Cardiac septum (tissue), 1 donor: ENCODE measurements at regions of chr1 and their contacts with region 1.

Region 1: DNA sequence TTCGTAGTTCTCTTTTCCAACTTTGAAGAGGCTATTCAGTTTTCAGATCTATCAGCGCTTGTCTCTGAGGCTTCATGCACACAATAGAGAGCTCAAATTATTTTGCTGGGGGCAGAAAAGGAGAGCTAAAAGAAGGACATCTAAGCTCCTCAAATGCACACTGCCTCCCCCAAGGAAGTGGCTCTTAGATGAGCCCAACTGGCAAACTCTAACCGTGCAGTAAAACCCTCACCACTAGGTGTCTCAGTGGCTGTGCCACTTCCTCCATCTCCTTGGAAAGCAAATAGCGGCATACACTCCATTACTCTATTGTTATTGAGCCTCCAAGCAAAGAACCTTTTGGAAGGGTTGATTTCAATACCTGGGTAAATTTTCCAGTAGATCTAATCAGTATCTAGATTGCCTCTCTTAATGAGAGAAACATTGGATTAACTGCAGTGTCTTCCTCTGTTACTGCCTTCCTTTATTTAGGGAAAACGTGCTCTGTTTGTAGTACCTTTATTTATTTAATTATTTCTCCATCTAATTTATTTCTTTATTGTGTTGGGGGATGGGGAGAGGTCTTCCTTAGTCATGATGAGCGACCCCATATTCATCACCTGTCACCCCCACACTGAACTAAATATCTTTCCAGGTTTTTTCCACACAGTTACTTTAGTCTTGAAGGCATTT is 9.2 kb upstream of the SFPQ start:
- DNase-seq: peak; percentile 76

Region 2: DNA sequence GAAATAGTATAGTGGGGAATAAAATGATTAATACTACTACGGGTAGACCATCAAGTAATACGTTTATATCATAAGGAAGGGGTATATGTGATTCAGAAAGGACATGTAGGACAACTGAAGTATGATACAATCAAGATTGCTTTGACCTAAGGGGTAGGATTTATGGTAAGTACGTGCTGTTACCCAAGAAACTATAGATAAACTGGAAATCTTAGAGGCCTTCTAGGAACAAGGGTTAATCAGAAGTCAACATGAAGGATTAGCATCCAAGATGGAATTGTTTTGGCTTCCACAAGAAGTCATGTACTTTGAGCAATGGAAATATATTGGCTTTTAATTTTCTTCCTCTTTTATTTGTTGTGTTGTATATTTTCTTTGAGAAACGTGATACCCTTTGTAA is 53.1 kb after region 1 on chr1:
- intact Hi-C with region 1: no loop called
- DNase-seq: no peak

Region 3: GRCh38 chr1:35287807-35288640 is 85.8 kb after region 1 on chr1:
- intact Hi-C with region 1: no loop called
- DNase-seq: no peak

Region 4: DNA sequence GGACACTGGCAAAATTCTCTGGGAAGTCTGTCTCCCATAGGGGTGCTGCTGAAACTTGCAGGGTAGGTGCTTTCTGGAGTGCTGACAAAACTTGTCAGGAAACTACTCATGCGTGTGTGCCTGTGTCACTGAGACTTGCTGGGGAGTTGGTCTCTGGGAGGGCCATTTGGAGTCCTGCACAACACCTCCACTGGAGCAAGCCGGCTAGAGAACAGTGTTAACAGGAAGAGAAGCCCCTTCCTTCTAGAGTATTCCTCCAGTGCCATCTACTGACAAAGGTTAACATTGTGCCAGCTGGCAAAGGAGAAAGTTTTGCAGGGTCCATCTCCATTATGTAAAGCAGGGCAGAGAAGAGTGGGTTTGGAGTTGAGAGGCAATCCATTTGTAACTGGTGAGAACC is 96.3 kb after region 1 on chr1:
- intact Hi-C with region 1: loop called (anchors 5 kb)
- DNase-seq: no peak

Region 5: DNA sequence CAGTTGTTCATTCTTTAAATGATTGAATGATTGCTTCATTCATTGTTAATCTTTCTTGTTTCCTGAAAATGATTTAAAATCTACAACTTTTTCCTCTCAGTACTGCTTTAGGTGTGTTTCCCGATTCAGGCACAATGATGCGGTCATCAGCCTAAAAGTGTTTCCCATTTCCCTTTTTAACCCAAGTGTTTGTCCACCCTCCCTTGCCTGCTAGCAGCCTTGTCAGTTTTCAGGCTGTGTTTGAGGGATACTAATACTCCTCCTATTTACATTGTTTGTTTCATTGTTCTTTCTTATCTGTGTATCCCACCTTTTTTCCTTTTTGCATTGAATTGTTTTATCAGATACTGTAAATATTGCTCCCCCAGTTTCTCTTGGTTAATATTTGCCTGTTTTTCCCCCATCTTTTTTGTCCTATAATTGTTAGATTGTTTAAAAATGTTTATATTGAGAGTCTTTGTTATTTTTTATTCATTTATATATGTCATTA is 224.0 kb after region 1 on chr1:
- intact Hi-C with region 1: loop called (anchors 10 kb)
- DNase-seq: no peak